A673 (cell line): ENCODE measurements at regions of chr5 and their contacts with region 1.

Region 1: DNA sequence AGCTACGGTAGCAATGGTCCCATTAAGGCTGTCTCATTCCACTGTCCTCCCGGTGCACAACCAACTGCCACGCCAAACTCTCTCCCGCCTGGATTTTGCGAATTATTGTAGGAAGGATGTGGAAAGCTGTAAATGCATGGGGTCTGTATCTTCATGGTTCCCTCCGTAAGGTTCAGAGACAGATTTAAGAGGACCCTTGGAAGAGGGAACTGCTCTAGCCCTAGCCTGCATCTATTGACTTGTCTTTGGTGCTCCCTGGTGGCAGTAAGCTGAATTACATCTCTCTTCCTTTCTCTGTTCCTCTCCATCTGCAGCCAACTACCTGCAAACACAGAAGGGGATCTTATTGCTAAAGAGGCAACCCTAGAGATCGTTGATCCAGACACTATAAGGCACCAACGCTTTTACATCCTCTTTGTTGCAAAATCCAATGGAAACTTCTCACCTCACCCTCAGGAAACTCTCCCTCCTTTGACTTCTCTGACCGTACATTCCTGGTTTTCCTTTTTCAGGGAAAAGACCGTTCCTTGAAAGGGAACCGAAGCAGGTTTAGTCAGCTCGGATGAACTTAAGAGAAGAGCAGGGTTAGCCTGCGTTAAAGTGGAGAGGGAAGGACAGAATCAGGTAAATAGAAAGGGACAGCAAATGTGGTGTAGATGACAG is 11.9 kb downstream of the CAPSL start:
- DNase-seq: peak; percentile 80
- H3K4me3 ChIP-seq: peak overlapping the region; percentile 41
- H3K27ac ChIP-seq: no peak overlapping the region
- H3K4me1 ChIP-seq: peaks cover 4% of the 10 kb centered on the region
- H3K27me3 ChIP-seq: no peaks in the 10 kb centered on the region
- CTCF ChIP-seq: peak; percentile 83

Region 2: GRCh38 chr5:35089334-35090314 is 836.9 kb before region 1 on chr5:
- CTCF ChIA-PET with region 1: interaction called, 6 read pairs
- POLR2A ChIA-PET with region 1: no interaction called
- intact Hi-C with region 1: loop called (anchors 1 kb)
- DNase-seq: peak; percentile 64
- H3K4me3 ChIP-seq: no peak overlapping the region
- H3K27ac ChIP-seq: no peak overlapping the region
- H3K4me1 ChIP-seq: no peaks in the 10 kb centered on the region
- H3K27me3 ChIP-seq: no peaks in the 10 kb centered on the region
- CTCF ChIP-seq: peak; percentile 74

Region 3: GRCh38 chr5:35202319-35203111 is 724.0 kb before region 1 on chr5:
- CTCF ChIA-PET with region 1: no interaction called
- POLR2A ChIA-PET with region 1: no interaction called
- intact Hi-C with region 1: loop called (anchors 10 kb)
- DNase-seq: peak; percentile 63
- H3K4me3 ChIP-seq: no peak overlapping the region
- H3K27ac ChIP-seq: no peak overlapping the region
- H3K4me1 ChIP-seq: no peaks in the 10 kb centered on the region
- H3K27me3 ChIP-seq: peaks cover 10% of the 10 kb centered on the region
- CTCF ChIP-seq: peak; percentile 73

Region 4: DNA sequence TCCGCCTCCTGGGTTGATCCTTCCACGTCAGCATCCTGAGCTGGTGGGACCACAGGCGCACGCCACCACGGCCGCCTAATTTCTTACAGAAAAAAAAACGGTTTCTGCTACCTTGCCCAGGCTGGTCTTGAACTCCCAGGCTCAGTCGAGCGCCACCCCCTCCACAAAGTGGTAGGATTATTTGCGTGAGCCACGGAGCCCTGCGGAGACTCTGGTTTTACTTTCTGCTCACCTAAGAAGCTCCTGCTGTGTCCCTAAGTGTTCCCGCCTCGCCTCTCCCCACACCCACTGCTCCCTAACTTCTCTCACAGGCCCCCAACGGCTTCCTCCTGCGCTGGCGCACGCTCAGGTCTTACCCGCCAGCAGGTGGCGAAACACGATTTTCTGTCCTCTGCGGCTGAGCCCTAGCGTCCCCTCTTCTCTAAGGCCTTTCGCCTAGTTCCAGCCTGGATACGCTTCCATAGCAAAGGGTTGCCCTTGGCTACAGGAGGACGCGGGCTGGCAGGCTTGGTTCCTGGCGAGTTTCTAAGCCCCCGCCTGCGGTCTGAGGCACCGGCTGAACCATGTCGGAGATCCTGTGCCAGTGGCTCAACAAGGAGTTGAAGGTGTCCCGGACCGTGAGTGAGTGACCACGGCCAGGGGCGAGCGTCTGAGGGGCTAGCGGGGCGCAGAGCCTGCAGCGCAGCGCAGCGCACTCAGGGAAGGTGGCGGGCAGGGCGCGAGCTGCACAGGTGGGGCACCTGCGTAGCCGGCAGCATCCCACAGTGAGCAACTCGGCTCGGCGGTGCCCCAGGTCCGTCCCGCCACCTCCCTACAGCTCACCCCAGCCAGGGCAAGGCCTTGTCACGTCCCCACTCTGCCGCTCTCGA is 308.9 kb before region 1 on chr5 and contains the start of gene SPEF2:
- CTCF ChIA-PET with region 1: interaction called, 10 read pairs
- POLR2A ChIA-PET with region 1: no interaction called
- intact Hi-C with region 1: loop called (anchors 1 kb)
- DNase-seq: peak; percentile 87
- H3K4me3 ChIP-seq: peak within 1 kb of the TSS; percentile 58
- H3K27ac ChIP-seq: no peak within 1 kb of the TSS
- H3K4me1 ChIP-seq: no peaks in the 10 kb centered on the region
- H3K27me3 ChIP-seq: no peaks in the 10 kb centered on the region
- CTCF ChIP-seq: peak; percentile 84
- total RNA-seq, gene SPEF2: 1.5 and 1.7 TPM in 2 replicates

Region 5: GRCh38 chr5:35651002-35651756 is 275.3 kb before region 1 on chr5:
- CTCF ChIA-PET with region 1: interaction called, 36 read pairs
- POLR2A ChIA-PET with region 1: no interaction called
- intact Hi-C with region 1: loop called (anchors 1 kb)
- DNase-seq: peak; percentile 64
- H3K4me3 ChIP-seq: no peak overlapping the region
- H3K27ac ChIP-seq: no peak overlapping the region
- H3K4me1 ChIP-seq: no peaks in the 10 kb centered on the region
- H3K27me3 ChIP-seq: no peaks in the 10 kb centered on the region
- CTCF ChIP-seq: peak; percentile 66

Region 6: DNA sequence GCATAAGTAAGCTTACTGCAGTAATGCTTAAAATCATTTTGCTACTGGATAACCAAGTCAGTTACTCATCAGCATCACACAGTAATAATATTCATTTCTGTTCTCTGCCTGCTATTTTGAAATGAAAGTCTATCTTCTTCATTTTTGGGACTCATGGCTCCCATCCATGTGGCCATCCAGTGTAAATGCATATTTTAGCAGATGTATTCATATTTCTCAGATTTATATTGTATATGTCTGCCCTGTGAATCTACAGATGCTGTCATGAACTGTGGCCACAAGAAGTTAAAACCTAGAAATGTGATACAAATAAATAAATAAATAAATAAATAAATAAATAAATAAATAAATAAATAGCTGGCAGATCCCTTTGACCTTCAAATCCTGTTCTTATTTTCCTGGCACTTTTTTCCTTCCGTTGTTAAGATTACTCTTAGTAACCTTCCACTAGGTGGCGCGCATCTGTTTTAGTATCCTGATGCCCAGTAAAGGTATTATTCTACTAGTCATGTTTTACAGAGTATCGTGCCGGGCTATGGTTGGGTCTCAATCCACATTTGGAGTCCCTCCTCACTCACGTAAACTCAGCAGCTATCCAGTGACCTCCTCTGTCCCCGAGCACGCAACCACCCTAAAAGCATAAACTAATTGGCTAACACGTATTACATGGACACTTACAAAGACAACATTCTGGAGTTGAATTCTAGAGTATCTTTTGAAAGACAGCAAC is 149.0 kb before region 1 on chr5:
- CTCF ChIA-PET with region 1: interaction called, 13 read pairs
- POLR2A ChIA-PET with region 1: no interaction called
- intact Hi-C with region 1: loop called (anchors 1 kb)
- DNase-seq: peak; percentile 87
- H3K4me3 ChIP-seq: no peak overlapping the region
- H3K27ac ChIP-seq: no peak overlapping the region
- H3K4me1 ChIP-seq: no peaks in the 10 kb centered on the region
- H3K27me3 ChIP-seq: no peaks in the 10 kb centered on the region
- CTCF ChIP-seq: peak; percentile 73